Tibial artery (tissue), 4 donors: ENCODE measurements at regions of chr13 and their contacts with region 1.

Region 1: DNA sequence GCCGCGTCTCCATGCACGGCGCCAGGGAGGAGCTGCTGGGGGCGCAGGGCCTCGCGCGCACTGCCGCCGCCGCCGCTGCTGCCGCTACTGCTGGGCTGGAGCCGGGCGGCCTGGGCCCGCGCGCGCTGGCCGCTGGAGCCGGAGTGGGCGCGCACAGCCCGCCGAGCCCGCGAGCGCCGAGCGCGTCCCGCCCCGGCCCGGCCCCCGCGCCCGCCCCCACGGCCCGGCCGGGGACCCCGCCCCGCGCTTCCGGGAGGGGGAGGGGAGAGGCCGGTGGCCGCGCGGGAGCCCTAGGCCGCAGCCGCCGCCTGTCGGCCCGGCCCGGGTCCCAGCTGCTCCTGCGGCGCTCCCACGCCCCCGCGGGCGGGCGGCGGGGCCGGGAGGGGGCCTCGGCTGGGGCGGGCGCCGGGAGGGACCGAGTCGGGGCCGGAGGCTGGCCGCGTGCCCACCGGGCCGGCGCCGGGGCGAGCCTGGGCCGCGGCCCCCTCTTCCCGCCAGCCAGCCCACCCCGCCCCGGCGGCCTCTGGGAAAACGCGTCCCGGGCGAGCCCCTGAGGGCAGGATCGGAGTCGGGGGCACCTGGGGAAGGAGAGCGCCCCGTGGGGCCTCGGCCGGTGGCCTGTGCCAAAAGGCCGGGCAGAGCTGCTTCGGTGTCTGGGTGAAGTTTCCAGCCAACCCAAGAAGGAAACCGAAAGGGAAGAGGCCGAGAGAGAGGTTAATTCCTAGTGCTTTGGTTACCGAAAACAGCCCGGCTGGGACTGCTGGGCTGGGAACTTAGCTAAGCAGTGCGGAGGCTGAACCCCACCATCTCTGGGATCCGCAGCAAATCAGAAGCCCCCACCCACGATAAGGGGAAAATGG is at the start of gene STK24:
- DNase-seq: peak in 1 of 2 donors; percentile 83
- H3K4me3 ChIP-seq: peak within 1 kb of the TSS; percentile 78 to 79
- H3K27ac ChIP-seq: peak within 1 kb of the TSS; percentile 90 to 93
- H3K4me1 ChIP-seq: peaks cover 0 to 51% (median 20%) of the 10 kb centered on the region in 4 donors
- H3K27me3 ChIP-seq: no peaks in the 10 kb centered on the region
- CTCF ChIP-seq: no peak

Region 2: DNA sequence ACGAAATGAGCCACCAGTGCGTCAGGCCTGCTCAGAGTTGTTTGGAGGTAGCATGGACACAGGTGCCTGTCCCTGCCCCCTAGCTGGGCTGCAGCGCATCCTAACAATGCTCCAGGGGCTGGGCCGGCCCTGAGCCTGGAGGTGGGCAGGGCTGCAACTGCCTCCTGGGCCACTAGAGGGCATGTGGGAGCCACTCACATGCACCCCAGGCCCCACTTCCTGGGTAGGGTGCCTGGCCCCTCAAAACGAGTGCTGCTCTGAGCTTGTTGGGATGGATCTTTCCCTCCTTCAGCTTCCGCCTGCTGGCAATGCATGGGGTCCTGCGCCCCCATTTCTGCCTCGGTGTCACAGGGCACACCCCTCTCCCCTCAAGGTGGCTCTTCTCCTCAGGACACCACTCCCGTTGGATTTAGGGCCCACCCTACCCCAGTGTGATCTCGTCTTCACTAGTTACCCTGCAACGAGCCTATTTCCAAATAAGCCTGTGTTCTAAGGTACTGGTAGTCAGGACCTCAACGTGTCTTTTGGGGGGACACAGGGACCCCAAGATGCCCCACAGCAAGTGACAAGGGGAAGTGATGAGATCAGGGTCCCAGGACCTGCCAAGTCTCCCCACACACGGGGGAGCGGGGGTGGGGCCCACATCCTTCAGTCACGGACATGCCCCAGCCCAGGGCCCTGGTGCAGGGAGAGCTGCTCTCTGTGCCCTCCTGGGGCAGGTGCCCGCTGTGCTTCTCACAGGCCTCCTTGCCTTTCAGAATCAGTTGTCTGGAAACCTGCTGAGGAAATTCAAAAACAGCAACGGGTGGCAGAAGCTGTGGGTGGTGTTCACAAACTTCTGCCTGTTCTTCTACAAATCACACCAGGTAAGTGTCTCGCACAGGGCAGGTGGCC is 131.6 kb before region 1 on chr13:
- intact Hi-C with region 1: loop called (anchors 10 kb)
- DNase-seq: peak; percentile 69 to 82
- H3K4me3 ChIP-seq: no peak overlapping the region
- H3K27ac ChIP-seq: peak overlapping the region; percentile 42 to 54
- H3K4me1 ChIP-seq: peaks cover 0 to 26% (median 19%) of the 10 kb centered on the region in 4 donors
- H3K27me3 ChIP-seq: no peaks in the 10 kb centered on the region
- CTCF ChIP-seq: peak; percentile 93 to 98

Region 3: GRCh38 chr13:98484289-98485219 is 92.6 kb before region 1 on chr13:
- intact Hi-C with region 1: loop called (anchors 1 kb)
- DNase-seq: peak; percentile 90 to 95
- H3K4me3 ChIP-seq: peak overlapping the region; percentile 6 to 31
- H3K27ac ChIP-seq: peak overlapping the region; percentile 76 to 83
- H3K4me1 ChIP-seq: peaks cover 0 to 51% (median 45%) of the 10 kb centered on the region in 4 donors
- H3K27me3 ChIP-seq: no peaks in the 10 kb centered on the region
- CTCF ChIP-seq: no peak

Region 4: GRCh38 chr13:98504371-98504963 is 72.7 kb before region 1 on chr13:
- intact Hi-C with region 1: loop called (anchors 5 kb)
- DNase-seq: no peak
- H3K4me3 ChIP-seq: no peak overlapping the region
- H3K27ac ChIP-seq: peak overlapping the region; percentile 78 to 81
- H3K4me1 ChIP-seq: peaks cover 13 to 96% (median 67%) of the 10 kb centered on the region in 4 donors
- H3K27me3 ChIP-seq: no peaks in the 10 kb centered on the region
- CTCF ChIP-seq: no peak

Region 5: DNA sequence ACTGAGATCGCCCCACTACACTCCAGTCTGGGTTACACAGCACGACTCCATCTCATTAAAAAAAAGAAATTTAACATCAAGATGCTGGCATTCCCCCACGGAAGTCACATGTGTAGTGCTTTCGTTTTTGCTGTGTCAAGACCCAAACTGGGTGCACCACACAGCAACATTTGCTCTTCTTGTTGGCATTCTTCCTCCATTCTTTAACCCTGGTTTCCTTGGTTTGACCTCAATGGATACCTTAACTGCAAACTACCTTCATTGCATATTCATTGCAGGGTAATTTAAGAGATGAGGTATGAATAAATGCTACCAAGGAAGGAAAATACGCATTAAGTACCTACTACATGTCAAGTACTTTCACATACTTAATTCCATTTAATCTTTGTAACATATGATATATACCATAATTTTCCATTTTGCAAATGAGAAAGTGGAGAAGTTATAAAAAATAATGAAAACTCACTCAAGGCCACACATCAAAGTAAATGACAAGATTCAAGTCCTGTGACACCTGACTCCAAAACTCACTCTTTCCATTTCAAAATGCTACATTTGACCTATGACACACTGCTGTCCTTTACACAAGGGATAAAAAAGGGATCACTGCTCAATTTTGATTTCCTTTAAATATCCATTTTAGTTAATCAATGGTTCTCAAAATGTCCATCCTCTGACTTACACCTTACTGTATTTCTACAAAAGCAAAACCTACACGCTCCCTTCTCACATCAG is 59.5 kb before region 1 on chr13:
- intact Hi-C with region 1: no loop called
- DNase-seq: no peak
- H3K4me3 ChIP-seq: no peak overlapping the region
- H3K27ac ChIP-seq: no peak overlapping the region
- H3K4me1 ChIP-seq: peaks cover 0 to 36% (median 18%) of the 10 kb centered on the region in 4 donors
- H3K27me3 ChIP-seq: no peaks in the 10 kb centered on the region
- CTCF ChIP-seq: no peak

Region 6: DNA sequence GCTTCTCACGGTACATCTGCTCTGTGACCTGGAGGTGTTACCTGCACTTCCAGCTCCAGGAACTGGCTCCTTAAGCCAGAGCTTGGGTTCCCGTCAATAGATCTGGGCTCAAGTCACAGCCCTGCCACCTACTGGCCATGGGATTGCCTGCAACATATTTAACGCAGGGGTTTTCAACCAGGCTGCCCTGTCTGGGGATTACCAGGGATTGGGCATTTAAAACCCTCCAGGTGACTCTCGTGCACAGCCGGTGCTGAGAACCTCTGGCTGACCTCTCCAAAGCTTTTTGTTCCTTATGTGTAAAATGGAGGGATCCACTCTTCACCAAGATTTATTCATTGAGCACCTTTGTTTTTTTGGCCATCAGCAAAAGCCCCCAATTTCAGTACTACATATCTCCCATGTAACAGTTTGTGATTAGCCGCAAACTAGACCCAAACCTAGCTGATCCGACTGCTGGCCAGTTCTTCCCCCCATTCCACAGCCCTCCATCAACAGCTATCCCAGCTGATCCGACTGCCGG is 76.3 kb after region 1 on chr13:
- intact Hi-C with region 1: loop called (anchors 10 kb)
- DNase-seq: peak; percentile 80 to 85
- H3K4me3 ChIP-seq: no peak overlapping the region
- H3K27ac ChIP-seq: no peak overlapping the region
- H3K4me1 ChIP-seq: no peaks in the 10 kb centered on the region
- H3K27me3 ChIP-seq: peaks cover 0 to 4% of the 10 kb centered on the region in 2 donors
- CTCF ChIP-seq: peak; percentile 89 to 90

Region 7: GRCh38 chr13:99484473-99484872 is 907.3 kb after region 1 on chr13:
- intact Hi-C with region 1: no loop called
- DNase-seq: no peak
- H3K4me3 ChIP-seq: no peak overlapping the region
- H3K27ac ChIP-seq: no peak overlapping the region
- H3K4me1 ChIP-seq: peaks cover 0 to 10% (median 1%) of the 10 kb centered on the region in 4 donors
- H3K27me3 ChIP-seq: no peaks in the 10 kb centered on the region
- CTCF ChIP-seq: no peak